GM10248 (cell line): ENCODE measurements at regions of chr1 and their contacts with region 1.

Region 1: GRCh38 chr1:234645474-234645953 is 35.5 kb upstream of the IRF2BP2 start:
- DNase-seq: no peak
- CTCF ChIP-seq: no peak

Region 2: GRCh38 chr1:234398849-234399381 is 246.6 kb before region 1 on chr1:
- CTCF ChIA-PET with region 1: no interaction called
- POLR2A ChIA-PET with region 1: no interaction called
- DNase-seq: peak; percentile 54
- CTCF ChIP-seq: no peak

Region 3: GRCh38 chr1:234602334-234603220 is 42.9 kb before region 1 on chr1:
- CTCF ChIA-PET with region 1: no interaction called
- POLR2A ChIA-PET with region 1: no interaction called
- DNase-seq: peak; percentile 34
- CTCF ChIP-seq: no peak

Region 4: GRCh38 chr1:234631721-234632125 is 13.8 kb before region 1 on chr1:
- CTCF ChIA-PET with region 1: interaction called, 10 read pairs
- POLR2A ChIA-PET with region 1: no interaction called
- DNase-seq: no peak
- CTCF ChIP-seq: no peak